Activated CD4-positive, alpha-beta memory T cell treated with anti-CD3 and anti-CD28 coated beads for 36 hours (primary cell): ENCODE measurements at regions of chr3 and their contacts with region 1.

Region 1: DNA sequence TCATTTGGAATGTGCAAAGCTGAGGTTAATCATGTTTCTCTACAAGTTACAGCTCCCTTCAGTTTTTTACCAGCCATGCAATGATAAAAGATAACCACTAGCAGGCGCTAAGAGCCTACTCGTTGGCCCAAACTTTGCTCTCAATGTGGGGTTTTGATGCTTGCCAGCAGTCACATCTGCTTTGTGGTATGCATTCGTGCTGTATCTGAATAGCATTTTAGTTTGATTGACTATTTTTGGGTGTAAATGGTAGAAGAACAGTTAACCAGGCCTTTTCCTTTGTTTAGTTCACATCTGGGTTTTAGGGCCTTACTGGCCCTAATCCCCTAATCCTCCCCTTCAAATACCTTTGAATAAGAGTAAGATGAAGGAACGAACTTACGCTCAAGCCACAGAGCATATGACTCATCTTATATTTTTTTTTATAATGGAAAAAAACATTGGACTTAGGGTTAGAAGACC is 4.4 kb upstream of the CLDN11 start:
- DNase-seq: peak; percentile 45
- H3K4me3 Mint-ChIP-seq: no peak overlapping the region
- H3K27ac Mint-ChIP-seq: no peak overlapping the region
- H3K4me1 Mint-ChIP-seq: peaks cover 8% of the 10 kb centered on the region
- H3K27me3 Mint-ChIP-seq: peaks cover 20% of the 10 kb centered on the region

Region 2: GRCh38 chr3:170144437-170144843 is 269.8 kb before region 1 on chr3:
- CTCF ChIA-PET with region 1: no interaction called
- POLR2A ChIA-PET with region 1: no interaction called
- intact Hi-C with region 1: no loop called
- DNase-seq: no peak
- H3K4me3 Mint-ChIP-seq: no peak overlapping the region
- H3K27ac Mint-ChIP-seq: peak overlapping the region; percentile 43
- H3K4me1 Mint-ChIP-seq: peaks cover 25% of the 10 kb centered on the region
- H3K27me3 Mint-ChIP-seq: no peaks in the 10 kb centered on the region

Region 3: GRCh38 chr3:170189398-170190256 is 224.6 kb before region 1 on chr3:
- CTCF ChIA-PET with region 1: interaction called, 7 read pairs
- POLR2A ChIA-PET with region 1: no interaction called
- intact Hi-C with region 1: loop called (anchors 1 kb)
- DNase-seq: no peak
- H3K4me3 Mint-ChIP-seq: no peak overlapping the region
- H3K27ac Mint-ChIP-seq: no peak overlapping the region
- H3K4me1 Mint-ChIP-seq: peaks cover 8% of the 10 kb centered on the region
- H3K27me3 Mint-ChIP-seq: no peaks in the 10 kb centered on the region

Region 4: GRCh38 chr3:170367797-170368196 is 46.4 kb before region 1 on chr3:
- CTCF ChIA-PET with region 1: no interaction called
- POLR2A ChIA-PET with region 1: no interaction called
- intact Hi-C with region 1: no loop called
- DNase-seq: no peak
- H3K4me3 Mint-ChIP-seq: no peak overlapping the region
- H3K27ac Mint-ChIP-seq: no peak overlapping the region
- H3K4me1 Mint-ChIP-seq: peaks cover 37% of the 10 kb centered on the region
- H3K27me3 Mint-ChIP-seq: no peaks in the 10 kb centered on the region

Region 5: DNA sequence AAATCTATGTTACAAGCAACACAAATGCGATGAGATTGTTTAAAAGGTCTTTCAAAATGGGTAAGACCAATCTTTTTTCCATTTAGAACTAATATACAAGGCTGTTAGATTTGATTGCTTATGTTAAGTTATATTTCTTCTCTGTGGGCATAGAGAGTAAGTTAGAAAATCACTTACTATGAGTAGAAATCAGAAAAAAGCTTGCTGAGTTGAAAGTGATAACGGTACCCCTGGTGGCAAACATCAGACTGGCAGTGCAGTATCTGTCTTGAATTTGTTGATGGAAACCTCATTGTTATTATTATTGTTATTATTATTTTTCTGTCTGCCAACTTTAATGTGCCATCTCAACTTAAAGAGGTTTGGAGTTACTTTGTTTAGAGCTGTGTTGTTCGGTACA is 16.8 kb after region 1 on chr3:
- CTCF ChIA-PET with region 1: interaction called, 14 read pairs
- POLR2A ChIA-PET with region 1: no interaction called
- intact Hi-C with region 1: no loop called
- DNase-seq: no peak
- H3K4me3 Mint-ChIP-seq: no peak overlapping the region
- H3K27ac Mint-ChIP-seq: no peak overlapping the region
- H3K4me1 Mint-ChIP-seq: peaks cover 17% of the 10 kb centered on the region
- H3K27me3 Mint-ChIP-seq: peaks cover 2% of the 10 kb centered on the region

Region 6: GRCh38 chr3:170563712-170564423 is 149.6 kb after region 1 on chr3:
- CTCF ChIA-PET with region 1: no interaction called
- POLR2A ChIA-PET with region 1: no interaction called
- intact Hi-C with region 1: loop called (anchors 5 kb)
- DNase-seq: peak; percentile 28
- H3K4me3 Mint-ChIP-seq: no peak overlapping the region
- H3K27ac Mint-ChIP-seq: no peak overlapping the region
- H3K4me1 Mint-ChIP-seq: peaks cover 11% of the 10 kb centered on the region
- H3K27me3 Mint-ChIP-seq: no peaks in the 10 kb centered on the region

Region 7: DNA sequence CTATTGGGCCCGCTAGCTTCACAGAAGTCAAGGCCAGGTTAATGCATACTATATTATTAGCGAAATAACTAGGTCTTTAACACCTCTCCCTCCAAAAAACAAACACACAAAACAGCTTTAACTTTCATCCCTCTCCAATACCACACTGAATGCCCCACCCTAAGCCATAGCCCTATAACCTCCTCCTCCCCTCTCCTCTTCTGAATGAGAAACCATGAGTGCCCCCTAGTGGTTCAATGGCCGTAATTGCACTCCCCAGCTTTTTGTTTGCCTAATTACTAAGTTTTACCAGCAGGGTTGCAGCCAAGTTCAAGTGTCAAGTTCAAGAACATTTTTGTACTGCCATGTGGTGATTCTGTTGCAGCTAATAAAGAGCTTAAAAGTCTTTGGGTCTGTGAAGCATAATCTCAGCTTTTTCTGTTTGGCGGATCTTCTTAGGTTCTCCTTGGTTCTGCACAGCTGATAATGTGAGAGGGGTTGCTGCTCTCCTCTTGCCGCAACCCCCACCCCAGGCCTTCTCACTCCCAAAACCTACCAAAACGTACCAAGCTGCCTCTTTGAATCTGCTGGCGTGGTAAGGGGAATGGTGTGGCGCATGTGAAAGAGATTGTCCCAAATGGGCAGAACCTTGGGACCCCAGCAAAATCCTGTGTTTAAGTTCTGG is 397.8 kb after region 1 on chr3:
- CTCF ChIA-PET with region 1: interaction called, 226 read pairs
- POLR2A ChIA-PET with region 1: no interaction called
- intact Hi-C with region 1: loop called (anchors 1 kb)
- DNase-seq: peak; percentile 75
- H3K4me3 Mint-ChIP-seq: no peak overlapping the region
- H3K27ac Mint-ChIP-seq: no peak overlapping the region
- H3K4me1 Mint-ChIP-seq: peaks cover 4% of the 10 kb centered on the region
- H3K27me3 Mint-ChIP-seq: no peaks in the 10 kb centered on the region